ENCODE measurements at regions of chr12 and their contacts with region 1.

Region 1: DNA sequence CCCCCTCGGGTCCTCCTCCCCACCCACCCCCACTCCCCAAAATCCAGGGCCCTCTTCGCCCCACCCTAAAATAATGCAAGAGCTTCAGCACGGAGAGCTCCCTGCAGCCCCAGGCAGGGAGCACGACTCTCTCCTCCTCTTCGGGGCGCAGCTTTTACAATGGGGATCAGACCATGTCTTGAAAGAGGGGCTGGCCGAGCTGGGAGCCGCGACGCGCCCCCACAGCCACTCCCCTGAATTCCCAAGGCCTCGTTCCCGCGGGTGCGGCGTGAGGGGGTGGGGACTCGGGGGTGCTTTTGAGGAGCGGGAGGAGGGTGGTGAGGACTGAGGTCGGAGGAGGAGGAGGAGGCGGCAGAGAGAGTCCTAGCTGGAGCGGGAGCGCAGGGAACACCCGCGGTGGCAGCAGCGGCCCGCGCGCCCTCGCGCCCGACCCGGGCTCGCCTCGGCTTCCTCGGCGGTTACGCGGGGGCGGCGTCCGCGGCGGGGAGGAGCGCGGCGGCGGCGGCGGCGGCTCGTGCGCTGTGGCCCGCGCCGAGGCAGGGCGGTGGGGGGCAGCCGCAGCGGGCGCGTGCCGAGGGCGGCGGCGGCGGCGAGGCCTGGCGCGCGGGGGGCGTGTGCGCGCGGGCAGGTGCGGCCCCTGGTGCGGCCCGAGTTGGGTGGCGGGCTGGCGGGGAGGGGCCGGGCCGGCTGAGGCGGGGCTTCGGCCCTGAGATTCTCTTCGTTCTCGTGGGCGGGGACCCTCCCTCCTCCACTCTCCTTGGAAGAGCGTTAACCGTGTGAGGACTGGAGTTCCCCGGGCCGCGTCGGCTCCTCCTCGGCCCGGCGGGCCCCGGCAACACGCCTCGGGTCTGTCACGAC is at the start of gene ANKS1B:
- DNase-seq: peak; percentile 61 to 76 (median 71)
- H3K4me3 ChIP-seq: peak within 1 kb of the TSS; percentile 15 to 78 (median 68)
- H3K27ac ChIP-seq: peak within 1 kb of the TSS in 4 of 5 donors; percentile 8 to 78 (median 66)
- H3K4me1 ChIP-seq: peaks cover 4 to 8% of the 10 kb centered on the region in 2 donors
- H3K27me3 ChIP-seq: no peaks in the 10 kb centered on the region
- CTCF ChIP-seq: no peak
- POLR2A ChIP-seq: peak in 1 of 2 donors; percentile 27
- total RNA-seq, gene ANKS1B: 4.2 to 28.1 (median 10.2) TPM

Region 2: DNA sequence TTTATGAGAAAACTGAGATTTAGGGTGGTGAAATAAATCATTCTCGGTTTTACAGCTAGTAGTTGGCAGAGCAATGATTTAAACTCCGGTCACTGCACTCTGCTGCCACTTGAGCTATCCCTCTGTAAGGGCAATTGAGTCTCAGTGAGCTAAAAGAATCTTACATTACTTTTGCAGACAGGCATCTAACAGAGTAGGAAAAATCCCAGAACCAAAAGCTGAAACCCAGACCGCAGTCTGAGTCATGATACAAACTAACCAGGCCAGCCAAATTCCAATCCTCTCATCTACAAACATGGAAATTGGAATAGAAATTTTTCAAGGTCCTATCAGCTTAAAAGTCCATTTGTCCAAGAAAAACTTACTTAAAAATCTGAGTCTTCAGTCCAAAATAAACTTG is 73.4 kb before region 1 on chr12:
- intact Hi-C with region 1: no loop called
- DNase-seq: peak; percentile 34 to 80 (median 61)
- H3K4me3 ChIP-seq: peak overlapping the region in 1 of 4 donors; percentile 25
- H3K27ac ChIP-seq: peak overlapping the region; percentile 11 to 74 (median 61)
- H3K4me1 ChIP-seq: peaks cover 4 to 10% of the 10 kb centered on the region in 2 donors
- H3K27me3 ChIP-seq: no peaks in the 10 kb centered on the region
- CTCF ChIP-seq: peak in 2 of 6 experiments; percentile 10 to 21
- POLR2A ChIP-seq: no peak

Region 3: DNA sequence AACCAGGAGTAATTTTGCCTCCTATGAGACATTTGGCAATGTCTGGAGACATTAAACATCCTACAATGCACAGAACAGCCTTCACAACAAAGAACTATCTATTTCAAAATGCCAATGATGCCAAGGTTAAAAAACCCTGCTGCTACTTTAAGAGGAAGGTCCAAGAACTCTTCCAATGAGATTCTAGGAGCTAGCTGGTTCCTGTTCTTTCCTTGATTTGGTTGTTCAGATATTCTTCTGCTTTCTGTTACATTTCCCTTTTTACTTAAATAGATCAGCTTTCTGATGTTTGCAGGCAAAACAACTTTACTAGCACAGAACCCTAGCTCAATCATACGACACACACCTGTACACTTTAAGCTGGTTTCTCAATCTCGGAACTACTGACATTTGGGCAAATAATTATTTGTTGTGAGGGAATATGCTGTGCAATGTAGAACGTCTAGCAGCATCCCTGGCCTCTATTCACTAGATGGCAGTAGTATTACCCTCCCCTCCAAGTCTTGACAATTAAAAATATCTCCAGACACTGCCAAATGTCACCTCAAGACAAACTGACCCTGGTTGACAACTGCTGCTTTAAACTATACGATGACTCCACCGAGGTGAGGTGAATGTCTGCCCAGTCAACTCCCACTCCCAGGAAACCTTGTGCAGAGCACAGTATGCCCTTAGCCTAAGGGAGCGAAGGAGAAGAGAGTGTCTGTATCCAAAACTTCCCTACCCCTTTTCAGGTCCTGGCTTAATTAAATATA is 153.7 kb after region 1 on chr12:
- intact Hi-C with region 1: loop called in 1 of 2 experiments (anchors 10 kb)
- DNase-seq: no peak
- H3K4me3 ChIP-seq: peak overlapping the region in 1 of 4 donors; percentile 33
- H3K27ac ChIP-seq: peak overlapping the region in 2 of 5 donors; percentile 5 to 62
- H3K4me1 ChIP-seq: peaks cover 8 to 45% of the 10 kb centered on the region in 2 donors
- H3K27me3 ChIP-seq: no peaks in the 10 kb centered on the region
- CTCF ChIP-seq: no peak
- POLR2A ChIP-seq: no peak